ENCODE measurements at regions of chr17 and their contacts with region 1.

Region 1: DNA sequence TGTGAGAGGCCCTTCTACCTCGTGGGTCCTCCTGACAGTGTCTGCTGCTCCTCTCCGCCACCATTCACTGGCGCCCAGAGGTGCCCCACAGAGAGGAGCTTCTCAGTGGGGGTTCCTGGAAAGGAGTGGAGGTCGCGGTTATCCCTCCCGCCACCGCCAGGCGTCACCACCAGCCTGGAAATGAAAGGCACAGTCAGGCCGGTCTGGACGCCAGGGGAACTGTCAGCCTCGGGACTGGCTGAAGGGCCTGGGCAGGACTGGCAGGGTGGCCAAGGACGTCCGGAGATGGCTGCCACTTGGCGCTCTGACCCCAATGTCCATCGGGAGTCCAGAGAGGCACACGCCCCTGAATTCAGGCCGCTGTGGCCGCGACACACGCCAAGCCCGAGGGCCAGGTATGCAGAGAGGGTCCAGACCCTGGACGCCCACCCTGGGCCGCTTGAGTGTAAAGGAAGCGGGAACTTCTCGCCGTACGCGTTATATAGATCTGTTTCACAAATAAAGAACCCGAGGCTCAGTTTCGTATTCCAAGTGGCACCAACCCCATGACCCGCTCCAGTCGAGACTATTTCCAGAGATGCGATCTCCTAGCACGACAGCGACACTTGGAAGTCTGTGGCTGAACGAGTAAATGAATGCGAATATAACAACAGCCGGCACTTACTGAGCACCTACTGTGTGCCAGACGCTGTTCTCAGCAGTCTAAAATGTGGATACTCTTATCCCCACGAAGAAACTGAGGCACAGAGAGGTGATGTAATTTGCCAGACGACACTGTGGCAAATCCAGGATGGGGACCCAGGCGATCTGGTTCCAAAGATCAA is 7.6 kb upstream of the NXPH3 start:
- DNase-seq: peak; percentile 88
- ATAC-seq: peak; percentile 66
- H3K4me3 ChIP-seq: peak overlapping the region in 3 of 5 experiments; percentile 20 to 39 (median 23)
- H3K4me3 Mint-ChIP-seq: peak overlapping the region; percentile 79
- H3K27ac ChIP-seq: no peak overlapping the region
- H3K27ac Mint-ChIP-seq: peak overlapping the region; percentile 32
- H3K4me1 ChIP-seq: peaks cover 6 to 17% of the 10 kb centered on the region in 2 donors
- H3K4me1 Mint-ChIP-seq: peaks cover 19% of the 10 kb centered on the region
- H3K27me3 ChIP-seq: peaks cover 0 to 42% (median 9%) of the 10 kb centered on the region in 4 experiments
- H3K27me3 Mint-ChIP-seq: peaks cover 36% of the 10 kb centered on the region
- CTCF ChIP-seq: peak; percentile 93

Region 2: DNA sequence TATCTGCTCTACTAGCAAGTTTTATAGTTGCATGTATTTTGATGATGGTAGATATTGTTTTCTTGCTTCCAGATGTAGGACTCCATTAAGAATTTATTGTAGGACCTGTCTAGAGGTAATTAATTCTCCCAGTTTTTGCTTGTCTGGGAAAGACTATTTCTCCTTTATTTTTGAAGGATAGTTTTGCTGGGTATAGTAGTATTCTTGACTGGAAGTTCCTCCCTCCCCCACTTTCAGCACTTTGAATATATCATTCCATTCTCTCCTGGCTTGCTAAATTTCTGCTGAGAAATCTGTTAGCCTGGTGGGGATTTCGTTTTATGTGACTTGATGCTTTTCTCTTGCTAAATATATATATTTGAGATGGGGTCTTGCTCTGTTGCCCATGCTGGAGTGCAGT is 145.4 kb before region 1 on chr17:
- CTCF ChIA-PET with region 1: no interaction called
- POLR2A ChIA-PET with region 1: no interaction called
- intact Hi-C with region 1: no loop called
- DNase-seq: no peak
- ATAC-seq: no peak
- H3K4me3 ChIP-seq: no peak overlapping the region
- H3K4me3 Mint-ChIP-seq: no peak overlapping the region
- H3K27ac ChIP-seq: no peak overlapping the region
- H3K27ac Mint-ChIP-seq: no peak overlapping the region
- H3K4me1 ChIP-seq: no peaks in the 10 kb centered on the region
- H3K4me1 Mint-ChIP-seq: no peaks in the 10 kb centered on the region
- H3K27me3 ChIP-seq: peaks cover 0 to 2% (median 0%) of the 10 kb centered on the region in 4 experiments
- H3K27me3 Mint-ChIP-seq: peaks cover 21% of the 10 kb centered on the region
- CTCF ChIP-seq: no peak

Region 3: GRCh38 chr17:49647256-49647585 is 79.1 kb after region 1 on chr17:
- CTCF ChIA-PET with region 1: interaction called, 10 read pairs
- POLR2A ChIA-PET with region 1: no interaction called
- intact Hi-C with region 1: no loop called
- DNase-seq: no peak
- ATAC-seq: no peak
- H3K4me3 ChIP-seq: no peak overlapping the region
- H3K4me3 Mint-ChIP-seq: no peak overlapping the region
- H3K27ac ChIP-seq: no peak overlapping the region
- H3K27ac Mint-ChIP-seq: no peak overlapping the region
- H3K4me1 ChIP-seq: no peaks in the 10 kb centered on the region
- H3K4me1 Mint-ChIP-seq: peaks cover 37% of the 10 kb centered on the region
- H3K27me3 ChIP-seq: no peaks in the 10 kb centered on the region
- H3K27me3 Mint-ChIP-seq: no peaks in the 10 kb centered on the region
- CTCF ChIP-seq: no peak

Region 4: DNA sequence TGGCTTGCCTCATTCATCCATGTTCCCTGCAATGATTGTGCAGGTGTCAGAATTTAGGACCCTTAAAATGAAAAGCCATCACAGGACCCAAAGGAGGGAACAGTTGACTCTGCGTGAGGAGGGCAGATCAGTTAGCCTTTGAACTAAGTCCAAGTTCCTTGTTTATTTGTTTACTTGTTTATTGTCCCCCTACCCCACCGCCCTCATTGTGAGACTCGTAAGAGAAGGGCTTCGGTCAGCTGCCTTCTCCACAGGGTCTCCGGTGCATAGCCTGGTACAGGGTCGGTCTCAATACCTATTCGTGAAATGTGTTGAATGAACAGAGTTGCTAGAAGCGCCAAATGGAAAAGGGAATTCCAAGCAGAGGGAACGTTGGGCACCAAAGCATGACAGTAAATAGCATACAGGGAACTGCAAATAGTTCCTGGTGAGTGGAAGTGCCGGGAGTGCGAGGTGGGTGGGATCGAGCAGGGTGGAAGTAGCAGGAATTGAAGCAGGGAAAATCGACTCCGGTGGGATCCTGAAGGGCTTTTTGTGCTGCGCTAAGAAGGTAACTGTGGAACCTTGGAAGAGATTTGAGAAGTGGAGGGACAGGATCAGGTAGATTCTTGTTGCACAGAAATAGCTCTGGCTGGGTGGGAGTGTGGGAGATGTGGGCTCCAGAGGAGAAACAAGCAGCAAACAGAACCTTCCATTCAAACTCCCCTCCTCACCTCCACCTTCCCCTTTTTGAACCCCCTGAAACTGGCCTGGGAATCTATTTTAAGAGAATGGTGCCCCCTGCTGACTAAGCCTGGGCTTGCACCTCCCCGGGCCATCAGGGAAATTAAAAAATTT is 127.0 kb after region 1 on chr17:
- CTCF ChIA-PET with region 1: interaction called, 485 read pairs
- POLR2A ChIA-PET with region 1: interaction called, 4 read pairs
- intact Hi-C with region 1: loop called (anchors 1 kb)
- DNase-seq: peak; percentile 83
- ATAC-seq: peak; percentile 80
- H3K4me3 ChIP-seq: no peak overlapping the region
- H3K4me3 Mint-ChIP-seq: no peak overlapping the region
- H3K27ac ChIP-seq: no peak overlapping the region
- H3K27ac Mint-ChIP-seq: no peak overlapping the region
- H3K4me1 ChIP-seq: peaks cover 16 to 19% of the 10 kb centered on the region in 2 donors
- H3K4me1 Mint-ChIP-seq: peaks cover 17% of the 10 kb centered on the region
- H3K27me3 ChIP-seq: no peaks in the 10 kb centered on the region
- H3K27me3 Mint-ChIP-seq: peaks cover 3% of the 10 kb centered on the region
- CTCF ChIP-seq: peak; percentile 97

Region 5: DNA sequence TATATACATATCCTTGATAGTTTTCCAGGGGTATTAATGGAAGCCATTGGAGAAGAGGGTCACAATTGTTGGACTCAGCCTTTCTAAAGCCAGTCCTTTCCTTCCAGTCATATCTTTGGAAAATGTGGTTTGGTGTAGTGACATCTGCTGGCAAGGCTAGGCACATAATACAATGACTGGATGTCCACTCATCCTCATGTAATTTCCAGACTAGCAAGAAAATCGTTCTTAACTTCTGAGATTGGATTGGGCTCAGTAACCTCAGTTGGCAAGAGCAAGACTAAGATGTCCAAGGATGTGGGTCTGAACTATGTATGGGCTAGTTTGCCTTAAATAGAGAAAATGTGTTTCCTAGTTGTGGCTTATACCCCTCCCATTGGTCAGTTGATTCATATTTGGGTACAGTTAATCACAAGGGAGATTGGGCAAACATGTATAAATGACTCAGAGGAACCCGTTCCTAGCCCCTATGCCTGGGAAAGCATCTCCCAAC is 211.7 kb after region 1 on chr17:
- CTCF ChIA-PET with region 1: interaction called, 17 read pairs
- POLR2A ChIA-PET with region 1: no interaction called
- intact Hi-C with region 1: loop called (anchors 1 kb)
- DNase-seq: peak; percentile 58
- ATAC-seq: peak; percentile 60
- H3K4me3 ChIP-seq: no peak overlapping the region
- H3K4me3 Mint-ChIP-seq: no peak overlapping the region
- H3K27ac ChIP-seq: no peak overlapping the region
- H3K27ac Mint-ChIP-seq: no peak overlapping the region
- H3K4me1 ChIP-seq: no peaks in the 10 kb centered on the region
- H3K4me1 Mint-ChIP-seq: peaks cover 3% of the 10 kb centered on the region
- H3K27me3 ChIP-seq: no peaks in the 10 kb centered on the region
- H3K27me3 Mint-ChIP-seq: no peaks in the 10 kb centered on the region
- CTCF ChIP-seq: peak; percentile 52

Region 6: GRCh38 chr17:49836111-49837030 is 268.3 kb after region 1 on chr17:
- CTCF ChIA-PET with region 1: no interaction called
- POLR2A ChIA-PET with region 1: no interaction called
- intact Hi-C with region 1: no loop called
- DNase-seq: no peak
- ATAC-seq: no peak
- H3K4me3 ChIP-seq: no peak overlapping the region
- H3K4me3 Mint-ChIP-seq: no peak overlapping the region
- H3K27ac ChIP-seq: no peak overlapping the region
- H3K27ac Mint-ChIP-seq: peak overlapping the region; percentile 1
- H3K4me1 ChIP-seq: no peaks in the 10 kb centered on the region
- H3K4me1 Mint-ChIP-seq: peaks cover 12% of the 10 kb centered on the region
- H3K27me3 ChIP-seq: no peaks in the 10 kb centered on the region
- H3K27me3 Mint-ChIP-seq: no peaks in the 10 kb centered on the region
- CTCF ChIP-seq: no peak

Region 7: DNA sequence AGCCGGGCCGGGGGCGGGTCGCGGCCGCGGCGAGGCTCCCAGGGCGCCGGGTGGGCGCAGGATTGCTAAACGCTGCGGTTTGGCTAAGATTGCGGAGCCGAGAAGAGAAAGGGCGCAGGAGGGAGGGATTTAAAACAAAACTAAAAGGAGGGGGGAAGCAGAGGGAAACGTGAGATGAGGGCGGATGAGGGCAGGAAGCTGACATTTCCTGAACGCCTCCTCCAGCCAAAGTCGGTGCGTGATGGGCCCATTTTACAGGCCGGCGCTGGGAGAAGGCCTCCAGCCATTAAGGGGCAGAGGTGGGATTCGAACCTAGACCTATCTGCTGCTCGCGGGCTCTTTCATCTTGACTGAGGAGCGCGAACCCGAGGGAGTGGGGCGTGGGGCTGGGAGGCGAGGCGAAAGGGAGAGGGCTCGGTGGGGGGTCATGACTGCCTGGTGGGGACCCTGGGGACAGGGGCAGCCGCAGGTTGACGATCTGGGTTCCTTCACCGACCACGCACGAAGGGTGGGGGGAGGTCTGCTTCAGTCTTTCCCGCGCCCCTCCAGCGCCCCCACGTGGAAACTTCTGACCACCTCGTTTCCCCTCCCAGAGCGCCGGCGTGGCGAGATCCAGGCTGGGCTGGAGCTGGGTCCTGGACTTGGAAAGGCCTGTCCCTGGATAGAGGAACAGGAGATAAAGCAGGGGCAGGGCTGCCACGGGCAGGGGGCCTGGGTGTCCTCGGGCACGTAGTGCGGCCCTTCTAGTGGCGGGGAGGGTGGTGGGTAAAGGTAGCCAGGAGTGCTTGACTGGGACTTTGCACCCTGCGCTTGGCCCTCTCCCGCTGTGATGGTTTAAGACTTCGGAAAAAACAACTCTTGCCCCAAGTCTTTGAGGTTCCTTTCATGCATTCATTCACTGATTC is 283.6 kb after region 1 on chr17:
- CTCF ChIA-PET with region 1: interaction called, 4 read pairs
- POLR2A ChIA-PET with region 1: no interaction called
- intact Hi-C with region 1: loop called (anchors 1 kb)
- DNase-seq: peak; percentile 75
- ATAC-seq: peak; percentile 68
- H3K4me3 ChIP-seq: peak overlapping the region; percentile 60 to 87 (median 69)
- H3K4me3 Mint-ChIP-seq: peak overlapping the region; percentile 92
- H3K27ac ChIP-seq: peak overlapping the region in 1 of 2 donors; percentile 29
- H3K27ac Mint-ChIP-seq: peak overlapping the region; percentile 74
- H3K4me1 ChIP-seq: peaks cover 12 to 15% of the 10 kb centered on the region in 2 donors
- H3K4me1 Mint-ChIP-seq: peaks cover 14% of the 10 kb centered on the region
- H3K27me3 ChIP-seq: peaks cover 0 to 23% (median 6%) of the 10 kb centered on the region in 4 experiments
- H3K27me3 Mint-ChIP-seq: peaks cover 25% of the 10 kb centered on the region
- CTCF ChIP-seq: peak; percentile 73